ENCODE measurements at regions of chr1 and their contacts with region 1.

Region 1: GRCh38 chr1:235093696-235094592 is 34.7 kb downstream of the TOMM20 start:
- DNase-seq: peak; percentile 83
- ATAC-seq: peak; percentile 75 to 82

Region 2: GRCh38 chr1:234486498-234487448 is 607.2 kb before region 1 on chr1:
- intact Hi-C with region 1: loop called in 1 of 2 experiments (anchors 5 kb)
- DNase-seq: no peak
- ATAC-seq: peak; percentile 83